Activated CD8-positive, alpha-beta memory T cell treated with anti-CD3 and anti-CD28 coated beads, Interleukin-2, amount 10 ng/mL, durations not matched to agents 7 days and 5 days (primary cell): ENCODE measurements at regions of chr1 and their contacts with region 1.

Region 1: DNA sequence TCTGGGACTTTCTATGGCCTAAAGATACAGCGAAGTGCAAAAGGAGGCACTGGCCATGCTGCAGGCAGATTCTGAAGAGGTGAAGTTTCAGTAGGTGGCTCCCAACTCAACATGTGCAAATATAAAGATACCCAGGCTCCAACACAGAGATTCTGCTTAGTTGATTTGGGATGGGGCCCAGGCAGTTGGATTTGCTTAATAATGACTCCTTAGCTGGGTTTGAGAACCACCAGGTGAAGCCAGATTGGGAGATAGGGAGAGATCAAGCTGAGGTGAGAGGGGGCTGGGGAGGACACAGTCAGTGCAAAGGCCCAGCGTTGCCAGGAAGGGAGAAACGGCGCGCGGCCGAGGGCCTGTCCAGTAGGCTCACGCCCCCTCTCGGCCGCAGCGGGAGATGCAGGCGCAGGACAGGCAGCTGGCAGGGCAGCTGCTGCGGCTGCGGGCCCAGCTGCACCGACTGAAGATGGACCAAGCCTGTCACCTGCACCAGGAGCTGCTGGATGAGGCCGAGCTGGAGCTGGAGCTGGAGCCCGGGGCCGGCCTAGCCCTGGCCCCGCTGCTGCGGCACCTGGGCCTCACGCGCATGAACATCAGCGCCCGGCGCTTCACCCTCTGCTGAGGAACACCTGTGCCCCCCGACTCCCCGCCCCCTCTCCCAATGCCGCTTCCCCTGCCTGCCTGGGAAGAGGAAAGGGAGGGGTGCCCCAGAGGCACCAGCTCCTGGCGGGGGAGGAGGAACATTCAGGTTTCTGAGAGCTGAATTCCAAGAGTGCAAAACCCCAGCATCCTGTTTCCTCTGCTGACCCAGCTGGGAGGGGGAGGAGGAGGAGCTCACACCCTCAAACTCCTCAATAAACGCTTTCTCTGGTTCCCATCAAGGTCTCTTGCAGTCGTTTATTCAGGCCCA is 1.2 kb downstream of the FAM167B start:
- DNase-seq: peak; percentile 90
- ATAC-seq: peak; percentile 38
- H3K4me3 Mint-ChIP-seq: peak overlapping the region; percentile 57
- H3K27ac Mint-ChIP-seq: peak overlapping the region; percentile 94
- H3K4me1 Mint-ChIP-seq: peaks cover 47% of the 10 kb centered on the region
- H3K27me3 Mint-ChIP-seq: no peaks in the 10 kb centered on the region

Region 2: DNA sequence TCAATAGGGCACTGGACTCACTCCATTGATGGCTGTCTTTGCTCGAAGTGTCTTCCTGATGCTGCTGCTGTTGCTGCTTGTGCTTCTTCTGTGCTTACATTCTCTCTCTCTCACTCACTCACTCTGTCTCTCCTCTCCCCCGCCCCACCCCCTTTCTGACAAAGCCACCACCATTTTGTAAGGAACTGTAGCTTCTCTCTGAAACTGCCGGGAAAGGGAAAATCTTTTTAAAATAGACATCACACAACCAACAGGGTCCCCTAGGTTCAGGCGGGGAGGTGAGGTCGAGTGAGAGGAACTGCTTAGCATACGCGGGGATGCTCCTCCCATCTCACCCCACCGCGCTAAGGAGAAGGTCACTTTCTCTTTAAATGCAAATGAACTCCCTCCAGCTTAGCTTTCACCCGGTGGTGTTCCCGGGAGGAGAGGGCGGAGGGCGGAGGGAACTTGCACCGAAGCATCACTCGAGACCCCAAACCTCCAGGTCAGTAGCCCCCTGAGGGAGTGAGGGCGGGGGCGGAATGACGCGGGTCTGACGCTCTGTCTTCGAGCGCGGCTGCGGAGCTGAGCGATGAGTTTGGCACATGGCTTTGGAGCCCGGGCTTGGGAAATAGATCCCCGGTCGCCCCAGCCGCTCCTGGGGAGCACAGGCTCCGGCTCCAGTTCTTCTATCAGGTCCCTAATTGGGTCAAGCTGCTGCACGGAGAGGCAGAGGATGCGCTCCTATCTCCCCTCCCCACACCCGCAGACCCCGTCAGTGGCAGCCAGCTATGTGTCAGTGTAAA is 47.8 kb before region 1 on chr1 and contains the start of gene CCDC28B:
- CTCF ChIA-PET with region 1: interaction called, 17 read pairs
- DNase-seq: peak; percentile 71
- ATAC-seq: peak; percentile 62
- H3K4me3 Mint-ChIP-seq: peak within 1 kb of the TSS; percentile 87
- H3K27ac Mint-ChIP-seq: peak within 1 kb of the TSS; percentile 94
- H3K4me1 Mint-ChIP-seq: peaks cover 68% of the 10 kb centered on the region
- H3K27me3 Mint-ChIP-seq: no peaks in the 10 kb centered on the region
- total RNA-seq, gene CCDC28B: 33.0 to 43.3 TPM

Region 3: GRCh38 chr1:32221980-32222755 is 26.1 kb before region 1 on chr1 and contains the starts of genes EIF3I and TMEM234:
- CTCF ChIA-PET with region 1: interaction called, 99 read pairs
- DNase-seq: peak; percentile 96
- ATAC-seq: peak; percentile 90
- H3K4me3 Mint-ChIP-seq: peak within 1 kb of the TSS; percentile 97
- H3K27ac Mint-ChIP-seq: peak within 1 kb of the TSS; percentile 97
- H3K4me1 Mint-ChIP-seq: peaks cover 33% of the 10 kb centered on the region
- H3K27me3 Mint-ChIP-seq: no peaks in the 10 kb centered on the region
- total RNA-seq, gene EIF3I: 162 to 227 TPM
- total RNA-seq, gene TMEM234: 11.7 to 12.3 TPM

Region 4: DNA sequence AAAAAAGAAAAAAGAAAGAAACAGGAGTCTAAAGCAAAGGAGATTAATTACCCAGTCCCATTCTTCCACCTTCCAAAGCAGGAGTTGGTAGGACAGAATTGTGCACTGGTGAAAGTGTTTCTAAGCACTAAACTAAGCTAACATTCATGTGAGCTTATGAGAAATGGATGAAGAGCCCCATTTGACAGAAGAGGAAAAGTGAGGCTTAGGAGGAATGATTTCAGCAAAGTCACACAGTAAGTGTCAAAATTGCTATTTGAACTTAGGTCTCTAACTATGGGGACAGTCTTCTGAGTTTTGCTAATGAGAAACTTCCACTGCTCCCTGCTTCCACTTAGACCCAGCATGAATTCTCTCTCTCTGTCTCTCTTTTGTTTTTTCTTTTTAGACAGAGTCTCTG is 21.5 kb after region 1 on chr1:
- CTCF ChIA-PET with region 1: interaction called, 94 read pairs
- DNase-seq: no peak
- ATAC-seq: no peak
- H3K4me3 Mint-ChIP-seq: no peak overlapping the region
- H3K27ac Mint-ChIP-seq: peak overlapping the region; percentile 39
- H3K4me1 Mint-ChIP-seq: peaks cover 66% of the 10 kb centered on the region
- H3K27me3 Mint-ChIP-seq: no peaks in the 10 kb centered on the region

Region 5: GRCh38 chr1:32372149-32372756 is 124.0 kb after region 1 on chr1:
- CTCF ChIA-PET with region 1: interaction called, 14 read pairs
- DNase-seq: peak; percentile 84
- ATAC-seq: peak; percentile 82
- H3K4me3 Mint-ChIP-seq: no peak overlapping the region
- H3K27ac Mint-ChIP-seq: peak overlapping the region; percentile 5
- H3K4me1 Mint-ChIP-seq: peaks cover 20% of the 10 kb centered on the region
- H3K27me3 Mint-ChIP-seq: no peaks in the 10 kb centered on the region